Psoas muscle (tissue), 8 donors: ENCODE measurements at regions of chr11 and their contacts with region 1.

Region 1: DNA sequence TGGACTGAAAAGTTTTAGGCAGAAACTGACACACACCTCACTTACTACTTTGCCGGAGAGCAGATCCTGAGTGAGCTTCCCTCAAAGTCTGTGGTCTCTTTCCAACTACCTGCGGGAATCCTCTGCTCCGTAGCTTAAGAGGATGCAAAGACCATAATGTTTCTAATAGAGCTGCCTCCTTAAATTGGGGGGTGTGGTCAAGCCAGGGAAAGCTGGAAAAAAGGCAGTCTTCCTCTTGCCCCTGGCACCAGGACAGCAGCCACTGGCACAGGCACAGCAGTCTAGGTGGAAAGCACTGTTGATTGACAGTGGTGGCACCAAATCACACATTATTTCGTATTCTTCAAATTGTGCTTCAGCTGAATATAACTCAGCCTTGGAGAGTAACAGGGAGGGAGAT is at the start of gene ETS1:
- DNase-seq: no peak
- ATAC-seq: no peak
- H3K4me3 ChIP-seq: peak within 1 kb of the TSS; percentile 43
- H3K27ac ChIP-seq: no peak within 1 kb of the TSS
- H3K4me1 ChIP-seq: peaks cover 8% of the 10 kb centered on the region
- H3K27me3 ChIP-seq: peaks cover 0 to 16% (median 5%) of the 10 kb centered on the region in 3 donors
- CTCF ChIP-seq: no peak
- total RNA-seq, gene ETS1: 19.3 to 32.4 (median 27.1) TPM

Region 2: DNA sequence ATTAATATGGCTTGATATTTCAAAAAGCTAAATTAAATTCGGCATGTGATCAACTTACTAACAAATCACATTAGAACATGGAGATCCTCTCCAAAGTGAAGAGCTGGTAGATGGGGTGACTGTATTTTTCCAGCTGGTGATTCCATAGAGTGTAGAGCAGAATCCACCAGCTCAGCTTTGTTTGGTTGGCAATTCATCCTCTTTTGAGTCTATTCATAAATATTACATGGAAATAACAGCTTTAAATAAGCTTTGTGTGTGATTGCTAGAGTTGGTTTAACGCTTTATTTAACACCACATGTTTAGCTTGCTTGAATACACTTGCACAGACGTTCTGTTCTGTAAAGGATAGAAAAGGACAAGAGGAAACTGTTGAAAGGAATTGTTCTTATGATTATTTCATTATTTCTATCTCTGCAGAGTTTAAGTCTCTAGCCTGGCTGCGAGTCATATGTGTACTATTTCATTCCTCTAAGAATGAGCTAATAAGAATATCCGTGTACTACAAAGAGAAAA is 848.6 kb before region 1 on chr11:
- intact Hi-C with region 1: loop called in 1 of 2 experiments (anchors 5 kb)
- DNase-seq: no peak
- ATAC-seq: no peak
- H3K4me3 ChIP-seq: no peak overlapping the region
- H3K27ac ChIP-seq: no peak overlapping the region
- H3K4me1 ChIP-seq: no peaks in the 10 kb centered on the region
- H3K27me3 ChIP-seq: no peaks in the 10 kb centered on the region
- CTCF ChIP-seq: no peak